Vagina (tissue), 2 donors: ENCODE measurements at regions of chr2 and their contacts with region 1.

Region 1: DNA sequence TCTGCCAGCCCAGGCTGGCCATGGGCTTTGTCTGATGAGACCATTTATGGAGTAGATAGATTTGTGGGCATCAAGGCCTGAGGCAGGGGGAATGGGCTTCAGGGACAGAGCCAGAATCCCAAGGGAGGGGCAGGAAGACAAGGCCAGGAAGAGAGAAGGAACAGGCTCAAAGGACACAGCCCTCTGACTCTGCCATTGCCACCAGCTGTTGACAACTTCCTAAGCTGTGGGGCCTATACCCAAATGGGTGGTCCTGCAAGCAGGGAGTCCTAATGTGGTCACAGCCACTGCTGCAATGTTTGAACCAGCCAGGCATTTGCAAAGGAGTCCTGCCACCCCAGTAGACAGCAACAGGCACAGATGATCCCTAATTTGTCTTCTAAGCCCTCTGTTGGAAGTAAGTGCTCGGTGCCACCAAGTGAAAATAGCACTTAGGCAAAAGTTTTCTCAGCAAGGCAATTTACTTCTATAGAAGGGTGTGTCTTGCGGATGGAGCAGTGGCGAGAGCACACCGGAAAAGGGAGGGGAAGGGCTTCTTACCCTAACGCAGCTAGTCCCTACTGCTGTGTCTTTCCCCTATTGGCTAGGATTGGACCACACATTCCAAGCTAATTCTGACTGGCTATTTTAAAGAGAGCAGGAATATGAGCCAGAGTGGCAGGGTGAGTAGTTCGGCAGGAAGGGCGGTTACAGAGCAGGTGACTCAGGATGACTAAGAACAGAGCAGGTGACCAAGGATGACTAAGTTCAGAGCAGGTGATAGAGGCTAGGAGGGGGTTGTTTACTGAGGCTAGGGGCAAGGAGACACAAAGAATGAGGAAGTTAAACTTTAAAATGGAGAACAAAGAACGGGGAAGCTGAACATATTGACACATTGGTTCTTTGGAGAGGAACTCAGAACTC is 47.2 kb downstream of the C1QL2 start:
- DNase-seq: peak; percentile 65 to 74
- H3K4me3 ChIP-seq: no peak overlapping the region
- H3K27ac ChIP-seq: no peak overlapping the region
- H3K4me1 ChIP-seq: no peaks in the 10 kb centered on the region
- H3K27me3 ChIP-seq: no peaks in the 10 kb centered on the region
- CTCF ChIP-seq: no peak
- POLR2A ChIP-seq: no peak

Region 2: GRCh38 chr2:119264781-119265692 is 153.7 kb after region 1 on chr2:
- intact Hi-C with region 1: loop called (anchors 10 kb)
- DNase-seq: peak; percentile 79 to 88
- H3K4me3 ChIP-seq: no peak overlapping the region
- H3K27ac ChIP-seq: no peak overlapping the region
- H3K4me1 ChIP-seq: no peaks in the 10 kb centered on the region
- H3K27me3 ChIP-seq: no peaks in the 10 kb centered on the region
- CTCF ChIP-seq: peak; percentile 7 to 40 (median 34)
- POLR2A ChIP-seq: no peak